Activated CD8-positive, alpha-beta T cell treated with anti-CD3 and anti-CD28 coated beads, Interleukin-2, amount 10 ng/mL, durations not matched to agents 7 days and 5 days (primary cell): ENCODE measurements at regions of chr1 and their contacts with region 1.

Region 1: GRCh38 chr1:71080739-71081696 is at the start of gene ZRANB2:
- DNase-seq: peak; percentile 94
- ATAC-seq: peak; percentile 98
- H3K4me3 Mint-ChIP-seq: peak within 1 kb of the TSS; percentile 99
- H3K27ac Mint-ChIP-seq: peak within 1 kb of the TSS; percentile 100
- H3K4me1 Mint-ChIP-seq: peaks cover 26% of the 10 kb centered on the region
- H3K27me3 Mint-ChIP-seq: peaks cover 9% of the 10 kb centered on the region
- total RNA-seq, gene ZRANB2: 95.9 to 98.6 TPM

Region 2: GRCh38 chr1:71068325-71069240 is 12.4 kb before region 1 on chr1:
- CTCF ChIA-PET with region 1: interaction called, 9 read pairs
- POLR2A ChIA-PET with region 1: interaction called, 14 read pairs
- DNase-seq: no peak
- ATAC-seq: peak; percentile 86
- H3K4me3 Mint-ChIP-seq: peak overlapping the region; percentile 25
- H3K27ac Mint-ChIP-seq: peak overlapping the region; percentile 86
- H3K4me1 Mint-ChIP-seq: peaks cover 19% of the 10 kb centered on the region
- H3K27me3 Mint-ChIP-seq: no peaks in the 10 kb centered on the region